ENCODE measurements at regions of chr14 and their contacts with region 1.

Region 1: DNA sequence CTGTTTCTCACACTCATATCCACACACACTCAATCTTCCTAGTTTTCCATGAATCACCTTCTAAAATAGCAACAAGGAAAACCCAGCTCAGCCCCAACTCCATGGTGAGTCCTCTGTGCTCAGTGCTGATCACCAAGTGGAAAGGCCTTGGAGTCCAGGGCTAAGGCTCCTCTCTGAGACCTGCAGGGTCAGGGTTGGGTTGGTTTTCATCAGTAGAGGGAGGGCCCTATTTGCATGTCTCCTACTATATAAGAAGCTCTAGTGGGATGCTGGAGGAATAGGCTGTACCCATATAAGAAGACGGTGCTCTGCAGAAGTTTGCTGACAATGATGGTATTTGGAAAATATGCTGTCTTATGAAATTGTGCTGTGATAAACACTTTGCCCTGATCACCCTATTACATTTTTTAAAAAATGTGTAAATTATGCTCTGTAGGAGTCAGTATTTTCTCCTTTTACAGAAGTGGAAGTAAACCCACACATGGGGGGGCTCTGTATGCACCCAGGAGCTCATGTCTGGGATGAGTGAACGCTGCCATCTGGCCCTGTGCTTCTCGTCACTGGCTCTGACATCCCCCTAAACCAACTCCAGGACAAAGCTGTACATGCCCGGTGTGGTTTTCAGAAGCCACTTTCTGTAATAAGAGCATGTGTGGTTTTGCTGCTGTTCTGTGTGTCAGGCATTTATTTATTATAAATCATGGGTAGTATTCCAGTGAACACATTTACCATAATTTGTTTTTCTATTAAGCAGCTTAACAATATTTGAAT is 536.3 kb downstream of the TMEM121 start:
- DNase-seq: no peak
- H3K4me3 Mint-ChIP-seq: no peak overlapping the region
- H3K27ac Mint-ChIP-seq: no peak overlapping the region
- H3K4me1 Mint-ChIP-seq: peaks cover 28% of the 10 kb centered on the region
- H3K27me3 Mint-ChIP-seq: peaks cover 44% of the 10 kb centered on the region

Region 2: GRCh38 chr14:105879867-105880561 is 182.7 kb before region 1 on chr14:
- CTCF ChIA-PET with region 1: no interaction called
- POLR2A ChIA-PET with region 1: no interaction called
- intact Hi-C with region 1: no loop called
- DNase-seq: no peak
- H3K4me3 Mint-ChIP-seq: no peak overlapping the region
- H3K27ac Mint-ChIP-seq: no peak overlapping the region
- H3K4me1 Mint-ChIP-seq: no peaks in the 10 kb centered on the region
- H3K27me3 Mint-ChIP-seq: peaks cover 14% of the 10 kb centered on the region

Region 3: GRCh38 chr14:106013879-106014376 is 48.8 kb before region 1 on chr14:
- CTCF ChIA-PET with region 1: interaction called, 4 read pairs
- POLR2A ChIA-PET with region 1: no interaction called
- intact Hi-C with region 1: loop called (anchors 5 kb)
- DNase-seq: peak; percentile 69
- H3K4me3 Mint-ChIP-seq: peak overlapping the region; percentile 72
- H3K27ac Mint-ChIP-seq: peak overlapping the region; percentile 97
- H3K4me1 Mint-ChIP-seq: peaks cover 77% of the 10 kb centered on the region
- H3K27me3 Mint-ChIP-seq: no peaks in the 10 kb centered on the region

Region 4: DNA sequence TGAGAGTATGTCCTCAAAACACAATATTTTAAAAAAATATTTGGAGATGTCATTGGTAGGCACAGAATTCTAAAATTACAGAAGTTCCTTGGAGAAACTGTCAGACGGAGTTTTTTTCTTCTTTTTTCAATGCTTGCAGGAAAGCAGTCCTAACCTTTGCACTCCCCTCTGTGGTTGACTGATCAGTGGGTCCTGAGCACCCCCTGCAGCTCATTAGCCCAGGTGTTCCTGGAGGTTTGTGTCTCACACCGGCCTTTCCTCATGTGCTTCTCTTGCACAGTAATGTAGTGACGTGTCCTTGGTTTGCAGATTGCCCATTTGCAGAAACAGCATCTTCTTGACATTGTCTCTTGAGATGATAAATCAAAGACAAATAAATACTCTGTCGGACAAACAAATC is 23.3 kb before region 1 on chr14:
- CTCF ChIA-PET with region 1: interaction called, 29 read pairs
- POLR2A ChIA-PET with region 1: no interaction called
- intact Hi-C with region 1: loop called (anchors 2 kb)
- DNase-seq: peak; percentile 77
- H3K4me3 Mint-ChIP-seq: no peak overlapping the region
- H3K27ac Mint-ChIP-seq: no peak overlapping the region
- H3K4me1 Mint-ChIP-seq: peaks cover 17% of the 10 kb centered on the region
- H3K27me3 Mint-ChIP-seq: peaks cover 4% of the 10 kb centered on the region

Region 5: GRCh38 chr14:106174206-106174605 is 111.5 kb after region 1 on chr14:
- CTCF ChIA-PET with region 1: interaction called, 3 read pairs
- POLR2A ChIA-PET with region 1: no interaction called
- intact Hi-C with region 1: loop called (anchors 10 kb)
- DNase-seq: peak; percentile 74
- H3K4me3 Mint-ChIP-seq: no peak overlapping the region
- H3K27ac Mint-ChIP-seq: peak overlapping the region; percentile 18
- H3K4me1 Mint-ChIP-seq: peaks cover 54% of the 10 kb centered on the region
- H3K27me3 Mint-ChIP-seq: no peaks in the 10 kb centered on the region